Lower leg skin (tissue), 4 donors: ENCODE measurements at regions of chr12 and their contacts with region 1.

Region 1: GRCh38 chr12:85029456-85029855 is 6.6 kb downstream of the TSPAN19 start:
- DNase-seq: no peak
- H3K4me3 ChIP-seq: no peak overlapping the region
- CTCF ChIP-seq: no peak
- POLR2A ChIP-seq: no peak

Region 2: DNA sequence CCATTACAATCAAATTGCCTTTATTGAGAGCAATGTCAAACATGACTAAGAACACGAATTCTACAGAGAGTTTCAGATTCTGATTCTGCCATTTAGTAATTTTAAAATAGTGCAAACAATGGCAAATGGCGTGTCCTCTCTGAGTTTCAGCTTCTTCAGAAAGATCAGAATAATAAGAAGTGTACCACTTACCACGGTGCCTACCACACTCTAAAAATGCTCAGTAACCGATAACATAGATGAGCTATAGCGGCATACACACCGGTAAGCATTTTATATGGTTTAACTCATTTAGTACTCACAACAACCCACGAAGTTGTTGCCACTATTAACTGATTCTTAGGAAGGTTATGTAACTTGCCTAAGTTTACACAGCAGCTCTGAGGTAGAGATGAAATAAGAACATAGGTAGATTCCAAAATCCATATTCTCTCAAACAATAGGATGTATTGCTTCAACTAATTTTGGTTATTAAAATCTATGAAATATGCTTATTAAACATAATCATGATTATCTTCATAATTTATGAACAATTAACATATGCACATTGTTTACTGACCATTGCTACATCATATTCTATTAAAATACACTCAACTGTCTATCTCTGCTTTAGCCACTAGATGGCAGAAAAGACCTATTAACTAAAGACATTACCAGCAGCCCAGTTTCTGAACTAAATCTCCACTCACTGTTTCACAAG is 155.2 kb before region 1 on chr12:
- intact Hi-C with region 1: loop called (anchors 5 kb)
- DNase-seq: no peak
- H3K4me3 ChIP-seq: no peak overlapping the region
- CTCF ChIP-seq: peak in 1 of 3 donors; percentile 28
- POLR2A ChIP-seq: no peak

Region 3: GRCh38 chr12:84919271-84919670 is 110.2 kb before region 1 on chr12:
- intact Hi-C with region 1: no loop called
- DNase-seq: no peak
- H3K4me3 ChIP-seq: no peak overlapping the region
- CTCF ChIP-seq: no peak
- POLR2A ChIP-seq: no peak

Region 4: GRCh38 chr12:84974155-84974815 is 55.2 kb before region 1 on chr12:
- intact Hi-C with region 1: no loop called
- DNase-seq: no peak
- H3K4me3 ChIP-seq: no peak overlapping the region
- CTCF ChIP-seq: no peak
- POLR2A ChIP-seq: no peak

Region 5: DNA sequence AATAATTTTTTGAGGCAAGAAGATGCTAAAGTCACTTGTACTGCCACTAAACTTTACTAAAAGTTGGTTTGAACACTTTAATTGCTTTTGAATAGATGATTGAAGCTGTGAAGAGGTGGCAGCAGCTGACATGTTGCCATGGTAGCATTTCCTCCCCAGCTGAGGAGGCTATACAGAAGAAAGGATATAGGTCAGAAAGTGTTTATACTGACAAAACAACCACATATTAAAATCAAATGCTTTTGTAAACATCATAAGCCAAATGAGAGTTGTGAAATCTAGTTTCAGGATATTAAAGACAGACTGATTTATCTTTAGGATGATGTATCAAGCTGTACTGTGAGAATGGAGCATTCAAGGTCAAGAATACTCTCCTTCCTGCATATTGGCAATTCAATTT is 35.0 kb before region 1 on chr12:
- intact Hi-C with region 1: no loop called
- DNase-seq: no peak
- H3K4me3 ChIP-seq: no peak overlapping the region
- CTCF ChIP-seq: no peak
- POLR2A ChIP-seq: no peak